B cell (primary cell): ENCODE measurements at regions of chr13 and their contacts with region 1.

Region 1: DNA sequence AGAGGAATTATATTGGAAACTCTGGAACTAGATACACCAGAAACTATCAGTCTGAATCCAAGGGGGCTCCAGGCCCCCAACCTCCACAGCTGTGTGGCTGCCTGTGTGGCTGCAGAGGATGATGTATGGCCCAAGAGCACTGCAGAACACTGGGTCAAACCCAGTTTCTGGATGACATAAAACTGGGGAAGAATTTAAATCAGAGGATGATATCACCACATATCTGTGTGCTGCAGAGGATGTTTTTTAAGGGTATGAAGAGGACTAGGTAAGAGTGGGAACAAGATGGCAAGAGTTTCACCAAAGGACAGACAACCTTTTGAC is 226.4 kb downstream of the SUCLA2 start:
- DNase-seq: no peak
- ATAC-seq: no peak
- H3K4me3 ChIP-seq: no peak overlapping the region
- H3K4me3 Mint-ChIP-seq: no peak overlapping the region
- H3K27ac ChIP-seq: no peak overlapping the region
- H3K27ac Mint-ChIP-seq: no peak overlapping the region
- H3K4me1 ChIP-seq: no peaks in the 10 kb centered on the region
- H3K4me1 Mint-ChIP-seq: no peaks in the 10 kb centered on the region
- H3K27me3 ChIP-seq: peaks cover 0 to 6% (median 0%) of the 10 kb centered on the region in 4 experiments
- H3K27me3 Mint-ChIP-seq: peaks cover 33% of the 10 kb centered on the region
- CTCF ChIP-seq: no peak

Region 2: GRCh38 chr13:46831588-46832194 is 942.9 kb before region 1 on chr13:
- CTCF ChIA-PET with region 1: interaction called, 31 read pairs
- POLR2A ChIA-PET with region 1: no interaction called
- intact Hi-C with region 1: no loop called
- DNase-seq: peak; percentile 61
- ATAC-seq: no peak
- H3K4me3 ChIP-seq: no peak overlapping the region
- H3K4me3 Mint-ChIP-seq: no peak overlapping the region
- H3K27ac ChIP-seq: no peak overlapping the region
- H3K27ac Mint-ChIP-seq: no peak overlapping the region
- H3K4me1 ChIP-seq: no peaks in the 10 kb centered on the region
- H3K4me1 Mint-ChIP-seq: no peaks in the 10 kb centered on the region
- H3K27me3 ChIP-seq: no peaks in the 10 kb centered on the region
- H3K27me3 Mint-ChIP-seq: peaks cover 13% of the 10 kb centered on the region
- CTCF ChIP-seq: peak; percentile 93

Region 3: GRCh38 chr13:46893798-46894560 is 880.7 kb before region 1 on chr13:
- CTCF ChIA-PET with region 1: interaction called, 13 read pairs
- POLR2A ChIA-PET with region 1: no interaction called
- intact Hi-C with region 1: loop called (anchors 1 kb)
- DNase-seq: peak; percentile 80
- ATAC-seq: peak; percentile 94
- H3K4me3 ChIP-seq: peak overlapping the region; percentile 36 to 72 (median 53)
- H3K4me3 Mint-ChIP-seq: peak overlapping the region; percentile 79
- H3K27ac ChIP-seq: no peak overlapping the region
- H3K27ac Mint-ChIP-seq: no peak overlapping the region
- H3K4me1 ChIP-seq: peaks cover 15 to 23% of the 10 kb centered on the region in 2 donors
- H3K4me1 Mint-ChIP-seq: peaks cover 22% of the 10 kb centered on the region
- H3K27me3 ChIP-seq: peaks cover 0 to 25% (median 5%) of the 10 kb centered on the region in 4 experiments
- H3K27me3 Mint-ChIP-seq: peaks cover 65% of the 10 kb centered on the region
- CTCF ChIP-seq: peak; percentile 95

Region 4: DNA sequence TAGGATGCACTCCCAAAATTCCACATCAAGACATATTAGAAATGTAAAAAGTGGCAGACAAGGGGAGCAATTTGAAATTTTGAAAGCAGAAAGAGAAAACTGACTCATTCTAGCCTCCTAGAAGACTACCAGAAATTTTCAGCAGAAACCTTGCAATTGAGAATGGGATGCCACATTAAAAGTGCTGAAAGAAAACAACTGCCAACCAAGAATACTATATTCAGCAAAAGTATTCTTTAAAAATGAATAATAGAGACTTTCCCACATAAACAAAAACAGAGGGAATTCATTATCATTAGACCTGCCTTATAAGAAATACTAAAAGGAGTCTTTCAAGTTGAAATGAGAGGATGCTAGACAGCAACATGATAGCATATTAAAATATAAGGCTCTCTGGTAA is 799.5 kb before region 1 on chr13:
- CTCF ChIA-PET with region 1: interaction called, 11 read pairs
- POLR2A ChIA-PET with region 1: no interaction called
- intact Hi-C with region 1: no loop called
- DNase-seq: no peak
- ATAC-seq: no peak
- H3K4me3 ChIP-seq: no peak overlapping the region
- H3K4me3 Mint-ChIP-seq: no peak overlapping the region
- H3K27ac ChIP-seq: no peak overlapping the region
- H3K27ac Mint-ChIP-seq: no peak overlapping the region
- H3K4me1 ChIP-seq: no peaks in the 10 kb centered on the region
- H3K4me1 Mint-ChIP-seq: peaks cover 6% of the 10 kb centered on the region
- H3K27me3 ChIP-seq: no peaks in the 10 kb centered on the region
- H3K27me3 Mint-ChIP-seq: no peaks in the 10 kb centered on the region
- CTCF ChIP-seq: no peak